ENCODE measurements at regions of chr4 and their contacts with region 1.

Region 1: DNA sequence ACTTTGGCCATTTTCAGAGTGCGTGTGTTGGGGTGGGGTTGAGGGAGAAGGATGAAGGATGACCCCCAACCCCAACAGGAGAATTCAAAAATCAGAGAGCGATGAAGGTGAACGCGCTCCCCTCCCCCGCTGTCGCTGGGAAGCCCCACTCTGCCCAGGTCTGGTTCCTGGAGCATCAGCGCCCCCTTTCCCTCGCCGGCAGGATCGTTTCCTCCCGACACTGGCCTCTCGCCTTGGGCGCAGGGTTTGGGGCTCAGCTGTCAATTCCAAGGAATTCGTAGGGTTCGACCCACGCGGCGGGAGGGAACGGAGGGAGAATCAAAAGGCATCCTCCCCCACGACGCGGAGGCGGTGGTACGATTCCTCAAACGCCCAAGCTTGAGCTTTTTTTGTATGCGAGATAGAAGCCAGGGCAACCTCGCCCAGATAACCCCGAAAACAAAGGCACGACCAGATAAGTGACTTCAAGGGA is 1.0 kb upstream of the PDGFRA start:
- DNase-seq: peak; percentile 58 to 68 (median 62)
- ATAC-seq: peak; percentile 41
- H3K4me3 ChIP-seq: no peak overlapping the region
- H3K27ac ChIP-seq: peak overlapping the region in 1 of 4 donors; percentile 14
- H3K4me1 ChIP-seq: peaks cover 69% of the 10 kb centered on the region
- H3K27me3 ChIP-seq: peaks cover 5 to 76% of the 10 kb centered on the region in 2 donors
- CTCF ChIP-seq: peak; percentile 31 to 71 (median 49)
- POLR2A ChIP-seq: no peak

Region 2: DNA sequence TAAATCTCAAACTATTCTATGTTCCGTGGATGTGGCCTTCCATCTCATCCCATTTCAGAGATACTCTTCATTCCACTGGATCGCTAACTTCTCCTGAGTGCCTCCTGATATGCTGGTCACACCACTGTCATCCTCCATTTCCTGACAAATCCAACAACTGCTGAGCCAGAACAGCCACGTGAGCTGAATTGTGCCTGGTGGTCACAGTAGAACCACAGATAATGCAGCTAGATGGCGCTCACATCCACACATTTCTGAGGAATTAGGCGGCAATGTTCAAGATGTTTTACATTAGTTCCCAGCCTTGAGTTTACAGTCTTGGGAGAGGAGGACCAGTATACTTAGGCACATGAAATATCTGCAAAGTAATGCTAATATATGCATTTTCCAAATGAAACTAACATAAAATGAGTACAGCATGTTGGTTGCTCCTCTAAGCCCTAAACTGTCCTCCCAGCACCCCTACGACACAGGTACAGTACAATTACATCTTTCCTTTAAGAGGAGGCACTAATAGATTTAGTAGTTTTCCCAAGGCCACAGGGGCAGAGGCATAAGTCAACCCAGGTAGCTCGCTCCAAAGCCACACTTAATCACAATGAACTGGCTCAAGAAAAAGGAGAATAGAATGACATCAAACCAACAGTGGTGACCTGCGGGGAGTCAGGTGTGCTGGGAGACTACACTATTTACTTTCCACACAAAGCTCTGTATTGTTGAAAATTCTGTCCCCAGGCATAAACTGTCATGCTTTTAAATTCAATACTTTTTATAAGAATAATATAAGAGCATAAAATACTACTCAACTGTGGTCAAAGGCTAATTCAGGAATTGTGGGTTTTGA is 297.9 kb before region 1 on chr4:
- intact Hi-C with region 1: loop called (anchors 5 kb)
- DNase-seq: peak; percentile 76 to 86 (median 80)
- ATAC-seq: peak; percentile 81
- H3K4me3 ChIP-seq: no peak overlapping the region
- H3K27ac ChIP-seq: no peak overlapping the region
- H3K4me1 ChIP-seq: no peaks in the 10 kb centered on the region
- H3K27me3 ChIP-seq: no peaks in the 10 kb centered on the region
- CTCF ChIP-seq: peak; percentile 54 to 91 (median 86)
- POLR2A ChIP-seq: no peak

Region 3: GRCh38 chr4:54296548-54297203 is 68.6 kb after region 1 on chr4:
- intact Hi-C with region 1: no loop called
- DNase-seq: no peak
- ATAC-seq: peak; percentile 68
- H3K4me3 ChIP-seq: no peak overlapping the region
- H3K27ac ChIP-seq: no peak overlapping the region
- H3K4me1 ChIP-seq: no peaks in the 10 kb centered on the region
- H3K27me3 ChIP-seq: no peaks in the 10 kb centered on the region
- CTCF ChIP-seq: no peak
- POLR2A ChIP-seq: no peak

Measured in body of pancreas (tissue), 4 donors.